CD8-positive, alpha-beta memory T cell (primary cell): ENCODE measurements at regions of chr9 and their contacts with region 1.

Region 1: DNA sequence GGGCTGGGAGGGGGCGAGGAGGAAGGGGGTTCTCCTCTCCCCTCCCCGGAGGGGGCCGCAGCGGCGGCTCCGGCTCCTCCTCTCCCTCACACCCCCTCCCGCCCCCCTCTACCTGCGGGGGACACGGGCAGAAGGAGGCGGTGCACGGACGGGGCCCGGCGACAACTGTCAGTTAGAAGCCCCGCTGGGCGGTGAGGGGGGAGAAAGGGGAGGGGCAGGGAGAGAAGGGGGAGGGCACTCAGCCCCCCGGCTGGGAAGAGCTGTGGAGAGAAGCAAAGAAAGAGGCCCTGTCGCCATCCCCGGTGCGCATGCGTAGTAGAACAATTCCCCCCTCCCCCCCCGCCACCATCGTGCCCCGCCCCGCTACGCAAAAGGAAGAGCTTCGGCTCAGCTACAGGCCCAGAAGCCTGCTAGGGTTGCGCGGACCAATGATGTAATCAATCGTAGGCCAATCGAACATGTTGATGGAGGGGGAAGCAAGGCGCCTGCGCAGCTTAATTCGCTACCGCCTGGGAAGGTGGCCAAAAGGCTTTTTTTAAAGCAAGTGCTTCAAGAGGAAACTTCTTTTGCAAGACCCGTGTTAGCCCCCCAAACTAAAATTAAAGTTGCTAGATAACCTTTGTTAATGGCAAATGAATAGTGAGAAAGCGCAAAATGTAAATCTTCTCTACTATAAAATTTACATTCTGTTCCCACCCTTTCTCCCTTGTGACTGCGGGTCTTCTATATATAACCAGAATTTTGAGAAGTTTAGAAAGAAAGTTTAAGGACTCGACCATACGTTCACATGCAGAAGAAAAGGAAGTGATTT is 7.0 kb downstream of the RANBP6 start:
- DNase-seq: peak; percentile 86 to 98 (median 92)
- H3K4me3 ChIP-seq: peak overlapping the region; percentile 58
- H3K4me3 Mint-ChIP-seq: peak overlapping the region; percentile 80 to 99 (median 94)
- H3K27ac ChIP-seq: peak overlapping the region; percentile 81
- H3K27ac Mint-ChIP-seq: peak overlapping the region; percentile 56 to 99 (median 90)
- H3K4me1 ChIP-seq: peaks cover 34% of the 10 kb centered on the region
- H3K4me1 Mint-ChIP-seq: peaks cover 47 to 72% (median 67%) of the 10 kb centered on the region in 3 donors
- H3K27me3 ChIP-seq: no peaks in the 10 kb centered on the region
- H3K27me3 Mint-ChIP-seq: peaks cover 0 to 2% of the 10 kb centered on the region in 2 donors

Region 2: GRCh38 chr9:6024020-6024554 is 15.7 kb after region 1 on chr9:
- CTCF ChIA-PET with region 1: interaction called, 15 read pairs
- POLR2A ChIA-PET with region 1: interaction called, 6 read pairs
- DNase-seq: peak in 3 of 5 donors; percentile 27 to 47 (median 29)
- H3K4me3 ChIP-seq: peak overlapping the region; percentile 10
- H3K4me3 Mint-ChIP-seq: peak overlapping the region in 2 of 7 donors; percentile 14 to 65
- H3K27ac ChIP-seq: no peak overlapping the region
- H3K27ac Mint-ChIP-seq: peak overlapping the region in 2 of 8 donors; percentile 67 to 72
- H3K4me1 ChIP-seq: no peaks in the 10 kb centered on the region
- H3K4me1 Mint-ChIP-seq: peaks cover 5 to 6% (median 5%) of the 10 kb centered on the region in 3 donors
- H3K27me3 ChIP-seq: no peaks in the 10 kb centered on the region
- H3K27me3 Mint-ChIP-seq: peaks cover 6 to 31% of the 10 kb centered on the region in 2 donors